ENCODE measurements at regions of chr3 and their contacts with region 1.

Region 1: DNA sequence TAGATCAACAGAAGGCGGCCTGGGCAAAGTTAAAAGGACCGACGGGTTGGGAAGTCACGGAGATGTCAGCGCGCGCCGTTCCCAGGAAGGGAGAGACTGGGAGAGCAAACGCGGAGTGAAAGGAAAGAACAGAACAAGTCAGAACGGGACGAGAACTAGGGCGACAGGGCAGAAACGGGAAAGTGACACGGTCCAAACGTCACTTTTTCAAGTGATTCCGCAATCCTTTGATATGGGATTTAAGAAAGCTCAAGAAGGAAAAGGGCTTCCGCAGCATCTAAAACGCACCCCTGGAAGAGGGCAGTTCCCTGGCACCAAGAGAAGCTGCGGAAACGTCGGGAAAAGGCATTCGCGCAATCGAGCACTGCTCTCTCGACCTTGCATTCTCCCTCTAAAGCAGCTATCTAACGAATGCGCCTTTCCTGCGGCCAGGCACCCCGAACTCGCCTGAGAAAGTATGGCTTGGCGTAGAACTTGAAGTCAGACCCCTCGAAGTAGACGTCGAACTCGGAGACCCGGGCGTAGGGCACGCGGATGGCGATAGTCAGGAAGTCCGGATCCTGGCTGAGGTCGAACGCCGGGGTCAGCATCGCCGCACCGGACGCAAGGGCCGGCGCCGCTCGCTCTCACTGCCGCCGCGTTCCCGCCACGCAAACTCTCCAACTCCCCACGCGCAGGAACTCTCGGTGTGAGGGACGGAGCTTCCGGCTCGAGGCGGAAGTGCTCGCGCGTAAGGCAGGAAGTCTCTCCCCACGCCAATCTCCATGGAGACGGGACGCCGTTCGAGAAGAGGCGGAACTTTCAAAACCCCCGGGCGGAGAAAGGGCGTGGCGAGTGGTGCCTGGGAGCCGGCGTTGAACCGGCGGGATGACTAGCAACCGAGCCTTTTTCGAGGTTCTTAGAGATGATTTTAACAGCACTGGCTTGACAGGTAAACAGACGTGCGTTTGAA is at the start of gene SHQ1:
- DNase-seq: peak; percentile 82
- ATAC-seq: peak; percentile 93
- H3K4me3 ChIP-seq: peak within 1 kb of the TSS; percentile 82 to 85
- H3K27ac ChIP-seq: peak within 1 kb of the TSS; percentile 26
- H3K4me1 ChIP-seq: peaks cover 4 to 23% of the 10 kb centered on the region in 2 experiments
- H3K27me3 ChIP-seq: no peaks in the 10 kb centered on the region
- CTCF ChIP-seq: no peak
- POLR2A ChIP-seq: peak; percentile 65
- RAD21 ChIP-seq: no peak
- total RNA-seq, gene SHQ1: 27.6 TPM

Region 2: GRCh38 chr3:72872183-72872582 is 24.2 kb after region 1 on chr3:
- CTCF ChIA-PET with region 1: interaction called, 4 read pairs
- POLR2A ChIA-PET with region 1: no interaction called
- RAD21 ChIA-PET with region 1: interaction called in 1 of 2 experiments, 4 read pairs
- intact Hi-C with region 1: loop called (anchors 1 kb)
- DNase-seq: no peak
- ATAC-seq: no peak
- H3K4me3 ChIP-seq: no peak overlapping the region
- H3K27ac ChIP-seq: no peak overlapping the region
- H3K4me1 ChIP-seq: 0 out of 4 replicates have a peak, but pooled peaks cover 0 to 3% of the 10 kb centered on the region in 2 experiments
- H3K27me3 ChIP-seq: peaks cover 8% of the 10 kb centered on the region; the same call in 1 of the 2 replicates
- CTCF ChIP-seq: no peak
- POLR2A ChIP-seq: no peak
- RAD21 ChIP-seq: no peak

Region 3: DNA sequence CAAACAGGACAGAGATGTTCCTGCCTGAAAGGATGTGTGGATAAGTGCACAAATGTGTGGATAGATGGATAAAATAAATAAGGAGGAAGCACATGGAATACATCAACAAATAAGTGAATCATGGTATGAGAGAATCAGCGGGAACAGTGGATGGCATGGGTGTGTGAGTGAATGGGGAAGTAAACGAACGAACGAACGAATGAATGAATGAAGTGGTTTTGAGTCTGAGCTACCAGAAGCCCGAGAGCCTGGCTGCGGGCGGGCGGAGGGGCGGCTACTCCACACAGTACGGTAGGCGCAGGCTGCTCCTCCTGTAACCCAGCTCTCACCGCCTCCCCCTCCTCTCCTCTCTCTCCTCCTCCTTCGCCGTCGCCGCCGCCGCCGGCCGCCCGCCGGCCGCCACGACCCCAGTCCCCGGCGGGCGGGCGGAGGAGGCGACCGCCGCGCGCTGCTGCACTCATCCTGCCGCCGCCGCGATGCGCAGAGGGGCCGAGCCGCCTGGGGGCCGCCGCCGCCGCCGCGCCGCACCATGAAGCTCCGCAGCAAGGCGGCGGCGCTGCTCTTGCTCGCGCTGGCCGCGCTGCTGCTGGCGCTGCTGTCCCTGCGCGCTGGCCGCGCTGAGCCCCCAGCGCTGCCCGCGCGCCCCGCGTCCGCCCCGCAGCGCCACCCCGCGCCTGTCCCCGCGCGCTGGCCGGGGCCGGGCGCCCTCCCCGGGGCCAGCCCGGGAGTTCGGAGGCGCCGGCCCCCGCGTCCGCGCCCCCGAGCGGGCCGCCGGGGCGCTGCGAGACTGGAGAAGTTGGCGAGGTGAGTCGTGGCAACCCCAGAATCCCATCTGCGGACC is 39.9 kb after region 1 on chr3 and contains the start of gene GXYLT2:
- CTCF ChIA-PET with region 1: interaction called, 12 read pairs
- POLR2A ChIA-PET with region 1: no interaction called
- RAD21 ChIA-PET with region 1: no interaction called
- intact Hi-C with region 1: no loop called
- DNase-seq: no peak
- ATAC-seq: peak; percentile 91
- H3K4me3 ChIP-seq: peak within 1 kb of the TSS; percentile 50 to 70
- H3K27ac ChIP-seq: peak within 1 kb of the TSS; percentile 50; the same call in 1 of the 2 replicates
- H3K4me1 ChIP-seq: peaks cover 35 to 40% of the 10 kb centered on the region in 2 experiments
- H3K27me3 ChIP-seq: no peaks in the 10 kb centered on the region
- CTCF ChIP-seq: no peak
- POLR2A ChIP-seq: no peak
- RAD21 ChIP-seq: no peak
- total RNA-seq, gene GXYLT2: 5.6 TPM

Region 4: GRCh38 chr3:72996473-72997333 is 148.7 kb after region 1 on chr3 and contains the start of gene PPP4R2:
- CTCF ChIA-PET with region 1: no interaction called
- POLR2A ChIA-PET with region 1: interaction called, 3 read pairs
- RAD21 ChIA-PET with region 1: no interaction called
- intact Hi-C with region 1: loop called (anchors 5 kb)
- DNase-seq: peak; percentile 68
- ATAC-seq: peak; percentile 86
- H3K4me3 ChIP-seq: peak within 1 kb of the TSS; percentile 51 to 92
- H3K27ac ChIP-seq: peak within 1 kb of the TSS; percentile 82
- H3K4me1 ChIP-seq: peaks cover 6 to 21% of the 10 kb centered on the region in 2 experiments; a peak in 3 of 4 replicates
- H3K27me3 ChIP-seq: no peaks in the 10 kb centered on the region
- CTCF ChIP-seq: 0 out of 6 replicates have a peak, but pooled peaks of 1 of the 3 experiments have one; percentile 1
- POLR2A ChIP-seq: peak; percentile 82
- RAD21 ChIP-seq: no peak
- total RNA-seq, gene PPP4R2: 72.5 TPM

Region 5: GRCh38 chr3:73056014-73056844 is 208.2 kb after region 1 on chr3:
- CTCF ChIA-PET with region 1: interaction called, 60 read pairs
- POLR2A ChIA-PET with region 1: no interaction called
- RAD21 ChIA-PET with region 1: interaction called in 1 of 2 experiments, 9 read pairs
- intact Hi-C with region 1: loop called (anchors 1 kb)
- DNase-seq: peak; percentile 32
- ATAC-seq: peak; percentile 17; the same call in 1 of the 2 replicates
- H3K4me3 ChIP-seq: no peak overlapping the region
- H3K27ac ChIP-seq: no peak overlapping the region
- H3K4me1 ChIP-seq: no peaks in the 10 kb centered on the region
- H3K27me3 ChIP-seq: no peaks in the 10 kb centered on the region
- CTCF ChIP-seq: peak; percentile 34 to 61 (median 40); a peak in 4 of 6 replicates
- POLR2A ChIP-seq: no peak
- RAD21 ChIP-seq: peak; percentile 58

Region 6: GRCh38 chr3:73086071-73086494 is 238.1 kb after region 1 on chr3:
- CTCF ChIA-PET with region 1: interaction called, 43 read pairs
- POLR2A ChIA-PET with region 1: no interaction called
- RAD21 ChIA-PET with region 1: interaction called, 3 read pairs
- intact Hi-C with region 1: loop called (anchors 1 kb)
- DNase-seq: peak; percentile 38
- ATAC-seq: peak; percentile 83
- H3K4me3 ChIP-seq: no peak overlapping the region
- H3K27ac ChIP-seq: no peak overlapping the region
- H3K4me1 ChIP-seq: no peaks in the 10 kb centered on the region
- H3K27me3 ChIP-seq: no peaks in the 10 kb centered on the region
- CTCF ChIP-seq: peak; percentile 58 to 88 (median 78); a peak in 5 of 6 replicates
- POLR2A ChIP-seq: no peak
- RAD21 ChIP-seq: peak; percentile 88

Region 7: GRCh38 chr3:73143821-73144237 is 295.8 kb after region 1 on chr3:
- CTCF ChIA-PET with region 1: no interaction called
- POLR2A ChIA-PET with region 1: no interaction called
- RAD21 ChIA-PET with region 1: no interaction called
- intact Hi-C with region 1: no loop called
- DNase-seq: no peak
- ATAC-seq: no peak
- H3K4me3 ChIP-seq: no peak overlapping the region
- H3K27ac ChIP-seq: no peak overlapping the region
- H3K4me1 ChIP-seq: no peaks in the 10 kb centered on the region
- H3K27me3 ChIP-seq: peaks cover 28% of the 10 kb centered on the region
- CTCF ChIP-seq: no peak
- POLR2A ChIP-seq: no peak
- RAD21 ChIP-seq: no peak

Region 8: GRCh38 chr3:73502609-73503583 is 654.9 kb after region 1 on chr3:
- CTCF ChIA-PET with region 1: interaction called, 5 read pairs
- POLR2A ChIA-PET with region 1: no interaction called
- RAD21 ChIA-PET with region 1: no interaction called
- intact Hi-C with region 1: loop called (anchors 5 kb)
- DNase-seq: peak; percentile 56
- ATAC-seq: peak; percentile 81
- H3K4me3 ChIP-seq: no peak overlapping the region
- H3K27ac ChIP-seq: no peak overlapping the region
- H3K4me1 ChIP-seq: no peaks in the 10 kb centered on the region
- H3K27me3 ChIP-seq: peaks cover 8% of the 10 kb centered on the region; the same call in 1 of the 2 replicates
- CTCF ChIP-seq: peak; percentile 56 to 84 (median 70); a peak in 5 of 6 replicates
- POLR2A ChIP-seq: no peak
- RAD21 ChIP-seq: peak; percentile 76